ENCODE measurements at regions of chr2 and their contacts with region 1.

Region 1: DNA sequence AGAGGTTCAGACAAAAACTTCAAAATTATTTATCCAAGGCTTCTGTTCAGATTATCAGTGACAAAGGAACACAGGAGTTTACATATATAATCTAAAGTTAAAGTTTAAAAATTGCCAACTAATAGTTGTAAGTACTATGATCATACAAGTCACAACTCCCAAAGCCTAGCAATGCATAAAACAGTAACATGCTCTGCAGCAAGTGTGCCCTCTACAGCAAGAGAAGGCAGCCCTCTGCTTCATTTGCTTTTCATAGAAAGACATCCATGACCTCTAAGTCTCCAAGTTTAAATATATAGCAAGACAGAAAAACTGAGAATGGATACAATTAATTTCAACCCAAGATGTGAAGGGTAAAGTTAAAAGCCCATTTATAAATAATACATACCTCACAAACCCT is 13.3 kb downstream of the RAB1A start:
- DNase-seq: no peak
- ATAC-seq: no peak
- H3K4me3 ChIP-seq: no peak overlapping the region
- H3K4me3 Mint-ChIP-seq: peak overlapping the region in 1 of 3 donors; percentile 30
- H3K27ac ChIP-seq: no peak overlapping the region
- H3K27ac Mint-ChIP-seq: no peak overlapping the region
- H3K4me1 ChIP-seq: peaks cover 2 to 36% of the 10 kb centered on the region in 2 experiments
- H3K4me1 Mint-ChIP-seq: peaks cover 72 to 77% (median 77%) of the 10 kb centered on the region in 3 donors
- H3K27me3 ChIP-seq: no peaks in the 10 kb centered on the region
- H3K27me3 Mint-ChIP-seq: no peaks in the 10 kb centered on the region

Region 2: GRCh38 chr2:65103013-65103715 is 13.5 kb before region 1 on chr2:
- CTCF ChIA-PET with region 1: interaction called in 1 of 2 experiments, 4 read pairs
- POLR2A ChIA-PET with region 1: interaction called in 1 of 2 experiments, 12 read pairs
- DNase-seq: no peak
- ATAC-seq: no peak
- H3K4me3 ChIP-seq: no peak overlapping the region
- H3K4me3 Mint-ChIP-seq: no peak overlapping the region
- H3K27ac ChIP-seq: no peak overlapping the region
- H3K27ac Mint-ChIP-seq: no peak overlapping the region
- H3K4me1 ChIP-seq: peaks cover 0 to 5% of the 10 kb centered on the region in 2 experiments
- H3K4me1 Mint-ChIP-seq: peaks cover 30 to 42% (median 35%) of the 10 kb centered on the region in 3 donors
- H3K27me3 ChIP-seq: no peaks in the 10 kb centered on the region
- H3K27me3 Mint-ChIP-seq: no peaks in the 10 kb centered on the region

Measured in T-cell (primary cell).